ENCODE measurements at regions of chr6 and their contacts with region 1.

Region 1: DNA sequence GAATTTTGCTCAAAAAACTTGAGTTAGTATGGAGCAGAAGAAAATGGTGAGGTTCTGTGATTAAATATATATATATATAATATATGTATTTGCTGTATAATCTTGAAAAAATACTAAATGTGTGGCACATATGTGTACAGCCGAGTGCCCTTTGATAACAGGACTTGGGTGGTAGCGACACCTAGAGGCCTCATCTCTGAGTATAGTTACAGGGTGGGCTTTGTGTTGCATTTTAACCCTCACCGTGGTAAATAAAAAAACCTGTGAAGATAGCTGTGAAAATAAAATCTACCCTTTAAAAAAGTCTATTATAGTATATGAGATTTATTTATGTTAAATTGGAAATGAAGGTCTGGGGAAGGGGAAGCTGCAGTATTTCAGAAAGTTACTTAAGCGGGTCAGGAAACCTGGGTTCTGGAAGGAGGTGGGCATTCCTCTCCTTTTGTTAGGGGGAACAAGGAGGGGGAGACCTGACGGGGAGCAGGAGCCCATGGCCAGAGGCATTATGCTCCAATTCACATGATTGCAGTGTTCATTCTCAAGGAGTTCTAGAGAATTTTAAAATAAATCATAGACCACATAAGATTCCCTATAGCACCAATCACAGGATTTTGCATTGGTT is 82.7 kb downstream of the SH3BGRL2 start:
- DNase-seq: peak; percentile 49
- H3K4me3 ChIP-seq: no peak overlapping the region
- H3K27ac ChIP-seq: no peak overlapping the region
- H3K4me1 ChIP-seq: no peaks in the 10 kb centered on the region
- H3K27me3 ChIP-seq: no peaks in the 10 kb centered on the region
- CTCF ChIP-seq: peak; percentile 54 to 66 (median 63)
- EP300 ChIP-seq: no peak
- POLR2A ChIP-seq: no peak

Region 2: GRCh38 chr6:79117752-79118151 is 596.1 kb before region 1 on chr6:
- in situ Hi-C with region 1: no loop called
- intact Hi-C with region 1: no loop called
- DNase-seq: no peak
- H3K4me3 ChIP-seq: no peak overlapping the region
- H3K27ac ChIP-seq: no peak overlapping the region
- H3K4me1 ChIP-seq: no peaks in the 10 kb centered on the region
- H3K27me3 ChIP-seq: no peaks in the 10 kb centered on the region
- CTCF ChIP-seq: no peak
- EP300 ChIP-seq: no peak
- POLR2A ChIP-seq: no peak

Region 3: GRCh38 chr6:79570129-79571029 is 143.4 kb before region 1 on chr6:
- in situ Hi-C with region 1: loop called in 1 of 4 experiments (anchors 10 kb)
- intact Hi-C with region 1: loop called (anchors 10 kb)
- DNase-seq: peak; percentile 61
- H3K4me3 ChIP-seq: peak overlapping the region in 3 of 4 donors; percentile 5 to 44 (median 18)
- H3K27ac ChIP-seq: peak overlapping the region; percentile 47 to 70 (median 56)
- H3K4me1 ChIP-seq: peaks cover 0 to 25% (median 5%) of the 10 kb centered on the region in 4 donors
- H3K27me3 ChIP-seq: no peaks in the 10 kb centered on the region
- CTCF ChIP-seq: peak; percentile 54 to 82 (median 70)
- EP300 ChIP-seq: no peak
- POLR2A ChIP-seq: no peak

Region 4: DNA sequence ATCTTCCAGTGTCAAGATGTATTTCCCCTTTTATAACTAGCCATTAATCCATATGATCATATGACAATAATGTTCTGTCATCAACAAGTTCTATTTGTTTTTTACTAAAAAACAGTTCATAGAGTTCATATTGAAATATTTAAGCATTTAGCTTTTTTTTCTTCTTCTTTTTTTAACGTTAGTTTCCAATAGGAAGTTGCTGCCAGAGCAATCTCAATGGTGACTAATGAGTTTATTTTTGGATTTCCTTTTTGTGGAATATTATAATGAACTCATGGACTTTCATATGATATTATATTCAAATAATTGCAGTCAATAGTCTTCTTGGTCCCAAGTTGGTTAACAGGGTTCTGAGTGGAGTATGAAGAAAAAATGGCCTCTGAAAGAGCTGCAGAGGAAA is 735.9 kb after region 1 on chr6:
- in situ Hi-C with region 1: no loop called
- intact Hi-C with region 1: no loop called
- DNase-seq: no peak
- H3K4me3 ChIP-seq: no peak overlapping the region
- H3K27ac ChIP-seq: no peak overlapping the region
- H3K4me1 ChIP-seq: no peaks in the 10 kb centered on the region
- H3K27me3 ChIP-seq: no peaks in the 10 kb centered on the region
- CTCF ChIP-seq: no peak
- EP300 ChIP-seq: no peak
- POLR2A ChIP-seq: no peak

Measured in transverse colon (tissue), 4 donors.